MCF 10A (cell line): ENCODE measurements at regions of chr4 and their contacts with region 1.

Region 1: DNA sequence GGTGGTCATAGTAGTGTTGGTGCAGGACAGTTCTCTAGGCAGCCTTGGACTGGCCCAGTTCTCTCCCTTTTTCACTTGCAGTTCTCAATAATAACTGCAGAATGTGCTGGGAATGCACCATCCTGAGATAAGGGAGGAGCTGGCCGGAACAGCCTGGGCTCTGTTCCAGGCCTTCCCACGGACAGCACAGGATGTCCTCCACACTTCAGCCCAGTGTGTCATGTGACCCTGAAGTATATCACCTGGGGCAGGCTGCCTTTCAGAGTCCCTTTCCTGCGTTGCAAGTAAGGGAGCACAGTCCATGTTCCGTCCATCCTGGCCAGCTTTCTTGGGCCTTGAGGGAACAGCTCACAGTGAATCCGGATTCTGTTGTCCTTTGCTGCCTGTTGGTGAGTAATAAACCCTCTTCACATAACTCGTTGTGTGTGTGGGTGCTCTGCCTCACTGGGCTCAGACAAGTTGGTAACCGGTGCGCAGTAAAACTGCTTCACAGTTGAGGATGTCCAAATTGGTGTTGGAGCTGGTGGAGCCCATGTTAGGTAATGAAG is 32.3 kb upstream of the BBS12 start:
- DNase-seq: peak; percentile 86
- H3K4me3 Mint-ChIP-seq: peak overlapping the region; percentile 75
- H3K27ac Mint-ChIP-seq: peak overlapping the region; percentile 30
- H3K4me1 Mint-ChIP-seq: peaks cover 25% of the 10 kb centered on the region
- H3K27me3 Mint-ChIP-seq: no peaks in the 10 kb centered on the region
- CTCF ChIP-seq: no peak

Region 2: GRCh38 chr4:122285285-122285684 is 415.0 kb before region 1 on chr4:
- CTCF ChIA-PET with region 1: no interaction called
- POLR2A ChIA-PET with region 1: no interaction called
- intact Hi-C with region 1: no loop called
- DNase-seq: peak; percentile 11
- H3K4me3 Mint-ChIP-seq: no peak overlapping the region
- H3K27ac Mint-ChIP-seq: peak overlapping the region; percentile 67
- H3K4me1 Mint-ChIP-seq: no peaks in the 10 kb centered on the region
- H3K27me3 Mint-ChIP-seq: no peaks in the 10 kb centered on the region
- CTCF ChIP-seq: no peak

Region 3: GRCh38 chr4:122666527-122667245 is 33.6 kb before region 1 on chr4:
- CTCF ChIA-PET with region 1: no interaction called
- POLR2A ChIA-PET with region 1: interaction called, 15 read pairs
- intact Hi-C with region 1: no loop called
- DNase-seq: peak; percentile 88
- H3K4me3 Mint-ChIP-seq: no peak overlapping the region
- H3K27ac Mint-ChIP-seq: peak overlapping the region; percentile 86
- H3K4me1 Mint-ChIP-seq: peaks cover 42% of the 10 kb centered on the region
- H3K27me3 Mint-ChIP-seq: no peaks in the 10 kb centered on the region
- CTCF ChIP-seq: no peak

Region 4: GRCh38 chr4:122922877-122923511 is 222.7 kb after region 1 on chr4:
- CTCF ChIA-PET with region 1: no interaction called
- POLR2A ChIA-PET with region 1: interaction called, 14 read pairs
- intact Hi-C with region 1: no loop called
- DNase-seq: peak; percentile 86
- H3K4me3 Mint-ChIP-seq: no peak overlapping the region
- H3K27ac Mint-ChIP-seq: peak overlapping the region; percentile 74
- H3K4me1 Mint-ChIP-seq: peaks cover 5% of the 10 kb centered on the region
- H3K27me3 Mint-ChIP-seq: no peaks in the 10 kb centered on the region
- CTCF ChIP-seq: no peak